ENCODE measurements at regions of chr10 and their contacts with region 1.

Region 1: GRCh38 chr10:11863353-11864109 is 40.4 kb downstream of the PROSER2 start:
- DNase-seq: peak in 8 of 9 donors; percentile 33 to 79 (median 54)
- ATAC-seq: peak; percentile 90
- H3K4me3 ChIP-seq: peak overlapping the region; percentile 33
- H3K4me3 Mint-ChIP-seq: peak overlapping the region; percentile 57 to 93 (median 76)
- H3K27ac ChIP-seq: peak overlapping the region; percentile 50
- H3K27ac Mint-ChIP-seq: peak overlapping the region; percentile 74 to 95 (median 89)
- H3K4me1 ChIP-seq: peaks cover 14% of the 10 kb centered on the region in 2 donors
- H3K4me1 Mint-ChIP-seq: peaks cover 11 to 42% (median 29%) of the 10 kb centered on the region in 7 donors
- H3K27me3 ChIP-seq: no peaks in the 10 kb centered on the region
- H3K27me3 Mint-ChIP-seq: peaks cover 0 to 78% (median 0%) of the 10 kb centered on the region in 5 donors

Region 2: DNA sequence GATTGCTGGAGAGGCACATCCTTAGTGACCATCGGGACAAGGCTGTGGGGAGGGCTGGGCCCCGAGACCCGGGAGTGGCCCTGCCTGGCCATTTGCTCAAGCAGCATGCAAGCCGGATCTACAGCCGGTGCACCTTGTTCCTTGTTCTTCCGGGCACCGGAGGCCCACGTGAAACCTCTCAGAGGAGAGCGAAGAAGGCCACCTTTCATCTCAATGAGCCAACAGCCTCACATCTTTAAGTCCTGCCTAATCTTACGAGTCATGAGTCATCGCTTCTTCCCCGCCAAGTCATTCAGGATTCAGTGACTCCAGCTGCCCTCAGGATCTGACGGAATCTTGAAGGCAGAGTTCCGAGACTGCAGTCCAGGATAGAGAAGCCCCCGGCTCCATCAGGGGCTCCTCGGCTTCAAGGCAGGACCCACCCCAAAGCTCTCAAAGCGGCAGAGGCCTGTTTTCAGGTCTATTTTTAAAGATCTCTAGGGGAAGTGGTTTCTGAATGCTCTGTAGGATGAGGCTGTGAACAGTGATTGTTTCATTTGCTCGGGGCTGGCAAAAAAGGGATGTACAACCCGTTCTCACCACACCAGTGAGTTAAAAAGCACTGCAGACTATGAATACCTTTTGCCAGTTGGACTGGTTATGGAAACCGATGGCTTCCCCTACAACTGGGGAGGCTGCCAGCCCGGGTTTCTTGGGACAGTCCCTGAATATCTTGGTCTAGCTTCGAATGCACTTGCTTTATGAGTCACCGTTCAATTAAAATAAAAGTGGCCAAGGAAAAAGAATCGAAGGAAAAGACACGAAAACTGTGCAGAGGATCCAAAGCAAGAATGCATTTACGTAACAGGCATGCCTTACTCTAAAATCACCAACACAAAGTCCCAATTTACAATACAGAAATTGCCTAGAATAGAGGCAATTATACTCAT is 178.6 kb before region 1 on chr10:
- CTCF ChIA-PET with region 1: no interaction called
- POLR2A ChIA-PET with region 1: no interaction called
- intact Hi-C with region 1: no loop called
- DNase-seq: peak; percentile 45 to 89 (median 83)
- ATAC-seq: peak; percentile 86
- H3K4me3 ChIP-seq: peak overlapping the region; percentile 49
- H3K4me3 Mint-ChIP-seq: peak overlapping the region; percentile 82 to 91 (median 89)
- H3K27ac ChIP-seq: peak overlapping the region; percentile 78
- H3K27ac Mint-ChIP-seq: peak overlapping the region; percentile 92 to 99 (median 97)
- H3K4me1 ChIP-seq: peaks cover 26 to 51% of the 10 kb centered on the region in 2 donors
- H3K4me1 Mint-ChIP-seq: peaks cover 25 to 85% (median 78%) of the 10 kb centered on the region in 7 donors
- H3K27me3 ChIP-seq: no peaks in the 10 kb centered on the region
- H3K27me3 Mint-ChIP-seq: peaks cover 0 to 67% (median 0%) of the 10 kb centered on the region in 5 donors

Region 3: GRCh38 chr10:11713186-11713743 is 150.3 kb before region 1 on chr10:
- CTCF ChIA-PET with region 1: no interaction called
- POLR2A ChIA-PET with region 1: no interaction called
- intact Hi-C with region 1: loop called in 1 of 2 experiments (anchors 2 kb)
- DNase-seq: no peak
- ATAC-seq: no peak
- H3K4me3 ChIP-seq: no peak overlapping the region
- H3K4me3 Mint-ChIP-seq: peak overlapping the region in 1 of 10 donors; percentile 7
- H3K27ac ChIP-seq: no peak overlapping the region
- H3K27ac Mint-ChIP-seq: no peak overlapping the region
- H3K4me1 ChIP-seq: peaks cover 0 to 24% of the 10 kb centered on the region in 2 donors
- H3K4me1 Mint-ChIP-seq: peaks cover 11 to 37% (median 24%) of the 10 kb centered on the region in 7 donors
- H3K27me3 ChIP-seq: no peaks in the 10 kb centered on the region
- H3K27me3 Mint-ChIP-seq: peaks cover 4 to 83% (median 6%) of the 10 kb centered on the region in 5 donors

Region 4: DNA sequence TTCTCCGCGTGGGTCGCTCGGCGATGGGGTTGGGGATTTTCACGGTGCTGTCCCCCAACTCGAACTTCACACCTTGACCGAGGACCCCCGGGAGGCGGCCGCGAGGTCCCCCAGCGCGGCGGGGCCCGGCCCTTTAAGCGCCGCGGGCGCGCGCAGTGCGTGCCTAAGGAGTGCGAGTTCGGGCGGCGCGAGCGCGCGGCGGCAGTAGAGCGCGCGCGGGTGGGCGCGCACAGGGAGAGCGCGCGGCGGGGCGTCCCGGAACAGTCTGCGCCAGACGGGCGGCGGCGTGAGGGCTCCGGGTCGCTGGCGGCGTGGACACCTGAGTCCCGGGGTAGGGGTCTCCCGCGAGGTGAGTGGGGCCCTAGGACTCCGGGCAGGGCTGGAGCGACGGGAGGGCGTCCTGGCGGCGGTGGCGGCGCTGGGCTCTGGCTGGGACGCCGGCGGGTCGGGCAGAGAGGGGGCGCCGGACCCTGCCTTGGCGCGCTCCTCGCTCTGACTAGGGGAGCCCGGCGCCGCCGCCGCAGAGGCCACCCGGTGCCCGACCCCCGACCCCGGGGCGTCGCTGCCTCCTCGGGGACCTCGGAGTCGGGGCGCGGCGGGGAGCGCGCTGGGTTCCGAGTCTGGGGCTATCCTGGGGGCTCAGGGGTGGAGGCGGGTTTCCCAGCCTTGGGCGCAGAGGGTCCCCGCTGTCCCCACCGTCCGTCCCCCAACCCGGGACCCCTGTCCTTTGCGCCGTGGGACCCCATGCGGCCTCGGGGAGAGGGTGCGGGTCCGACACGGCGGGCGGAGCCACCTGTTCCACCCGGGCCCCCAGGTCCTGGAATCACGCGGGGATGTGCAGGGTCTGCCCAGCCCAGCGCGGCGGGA is 40.2 kb before region 1 on chr10 and contains the start of gene PROSER2:
- CTCF ChIA-PET with region 1: interaction called, 4 read pairs
- POLR2A ChIA-PET with region 1: no interaction called
- intact Hi-C with region 1: loop called in 1 of 2 experiments (anchors 5 kb)
- DNase-seq: peak; percentile 16 to 71 (median 45)
- ATAC-seq: peak; percentile 95
- H3K4me3 ChIP-seq: peak within 1 kb of the TSS; percentile 56
- H3K4me3 Mint-ChIP-seq: peak within 1 kb of the TSS; percentile 64 to 94 (median 83)
- H3K27ac ChIP-seq: peak within 1 kb of the TSS; percentile 29
- H3K27ac Mint-ChIP-seq: peak within 1 kb of the TSS in 4 of 9 donors; percentile 14 to 81 (median 58)
- H3K4me1 ChIP-seq: peaks cover 0 to 3% of the 10 kb centered on the region in 2 donors
- H3K4me1 Mint-ChIP-seq: peaks cover 0 to 27% (median 17%) of the 10 kb centered on the region in 7 donors
- H3K27me3 ChIP-seq: peaks cover 0 to 3% of the 10 kb centered on the region in 2 donors
- H3K27me3 Mint-ChIP-seq: peaks cover 26 to 60% (median 45%) of the 10 kb centered on the region in 5 donors
- total RNA-seq, gene PROSER2: 0.07 to 4.9 (median 1.8) TPM

Region 5: DNA sequence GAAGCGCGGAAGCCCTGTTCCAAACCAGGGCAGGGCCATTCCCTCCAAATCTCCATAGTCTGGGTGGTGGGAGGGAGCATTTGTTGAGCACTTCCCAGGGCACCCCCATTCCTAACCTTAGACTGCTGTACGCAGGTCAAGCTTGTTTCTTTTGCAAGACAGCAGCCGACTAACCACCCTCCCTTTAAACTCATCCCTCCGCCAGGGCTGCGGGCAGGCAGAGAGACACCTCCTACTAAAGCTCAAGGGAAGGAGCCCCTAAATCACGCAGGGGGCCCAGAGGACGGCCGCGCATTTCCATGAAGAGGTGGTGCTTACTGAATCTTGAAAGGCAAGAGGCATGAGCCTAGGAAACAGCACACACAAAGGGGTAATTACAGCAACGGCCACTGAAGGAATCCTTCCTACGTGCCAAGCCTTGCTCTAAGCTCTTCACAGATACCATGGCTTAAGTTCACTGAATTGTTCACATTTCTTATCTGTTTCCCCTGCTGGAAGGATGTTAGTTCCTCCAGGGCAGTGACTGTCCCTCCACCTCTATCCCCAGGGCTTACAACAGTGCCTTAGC is 49.6 kb after region 1 on chr10:
- CTCF ChIA-PET with region 1: no interaction called
- POLR2A ChIA-PET with region 1: no interaction called
- intact Hi-C with region 1: loop called in 1 of 2 experiments (anchors 10 kb)
- DNase-seq: no peak
- ATAC-seq: no peak
- H3K4me3 ChIP-seq: no peak overlapping the region
- H3K4me3 Mint-ChIP-seq: no peak overlapping the region
- H3K27ac ChIP-seq: no peak overlapping the region
- H3K27ac Mint-ChIP-seq: no peak overlapping the region
- H3K4me1 ChIP-seq: no peaks in the 10 kb centered on the region
- H3K4me1 Mint-ChIP-seq: peaks cover 0 to 5% (median 0%) of the 10 kb centered on the region in 7 donors
- H3K27me3 ChIP-seq: no peaks in the 10 kb centered on the region
- H3K27me3 Mint-ChIP-seq: peaks cover 0 to 10% (median 0%) of the 10 kb centered on the region in 5 donors

Region 6: GRCh38 chr10:13712837-13713581 is 1849.5 kb after region 1 on chr10:
- CTCF ChIA-PET with region 1: no interaction called
- POLR2A ChIA-PET with region 1: no interaction called
- intact Hi-C with region 1: no loop called
- DNase-seq: no peak
- ATAC-seq: peak; percentile 79
- H3K4me3 ChIP-seq: no peak overlapping the region
- H3K4me3 Mint-ChIP-seq: no peak overlapping the region
- H3K27ac ChIP-seq: no peak overlapping the region
- H3K27ac Mint-ChIP-seq: peak overlapping the region in 1 of 9 donors; percentile 15
- H3K4me1 ChIP-seq: peaks cover 0 to 6% of the 10 kb centered on the region in 2 donors
- H3K4me1 Mint-ChIP-seq: peaks cover 5 to 19% (median 10%) of the 10 kb centered on the region in 7 donors
- H3K27me3 ChIP-seq: peaks cover 0 to 2% of the 10 kb centered on the region in 2 donors
- H3K27me3 Mint-ChIP-seq: peaks cover 0 to 15% (median 5%) of the 10 kb centered on the region in 5 donors